Activated naive CD4-positive, alpha-beta T cell treated with anti-CD3 and anti-CD28 coated beads for 36 hours (primary cell): ENCODE measurements at regions of chr3 and their contacts with region 1.

Region 1: DNA sequence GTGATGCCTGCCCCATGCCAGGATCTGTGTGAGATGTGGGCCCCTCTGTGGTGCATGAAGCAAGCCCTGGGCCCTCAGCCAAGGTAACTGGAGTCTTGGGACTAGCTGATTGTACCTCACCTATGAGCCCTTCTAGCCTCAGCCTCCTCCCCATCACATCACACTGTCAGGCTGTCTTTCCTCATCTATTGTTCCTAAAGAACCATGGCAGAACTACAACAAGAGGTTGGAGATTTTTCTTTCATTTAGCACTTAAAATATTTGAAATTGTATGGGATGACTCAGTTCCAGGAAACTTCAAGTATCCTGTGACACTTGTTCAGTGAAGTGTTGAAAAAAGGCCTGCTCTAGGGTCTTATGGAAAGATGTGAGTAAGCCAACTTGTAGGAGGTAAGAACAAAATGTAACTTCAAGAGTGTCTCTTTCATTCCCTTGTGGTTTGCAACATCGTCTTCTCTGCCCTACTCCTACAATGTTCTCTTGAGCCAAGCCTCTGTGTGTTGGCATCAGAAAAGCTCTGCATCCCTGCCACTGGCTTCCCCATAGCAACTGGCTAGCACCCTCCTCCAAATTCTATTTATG is 58.7 kb upstream of the TIPARP start:
- DNase-seq: no peak
- H3K4me3 Mint-ChIP-seq: no peak overlapping the region
- H3K27ac Mint-ChIP-seq: peak overlapping the region; percentile 65
- H3K4me1 Mint-ChIP-seq: peaks cover 21% of the 10 kb centered on the region
- H3K27me3 Mint-ChIP-seq: peaks cover 3% of the 10 kb centered on the region

Region 2: DNA sequence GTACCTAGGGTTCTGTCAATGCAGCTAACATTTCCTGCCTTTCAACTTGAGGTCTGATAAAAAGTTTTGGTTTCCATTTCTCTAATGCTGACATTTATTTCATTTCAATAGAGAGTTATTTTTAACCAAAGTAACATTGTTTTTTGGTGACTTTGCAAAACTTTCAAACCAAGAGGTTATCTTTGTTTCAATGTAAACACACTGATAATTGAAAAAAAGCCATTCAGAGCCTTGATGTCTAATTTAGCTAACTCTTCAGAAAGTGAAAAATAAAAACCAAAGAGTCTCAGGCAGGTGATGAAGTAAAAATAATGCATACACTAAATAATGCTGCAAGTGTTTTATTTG is 49.1 kb after region 1 on chr3:
- CTCF ChIA-PET with region 1: no interaction called
- intact Hi-C with region 1: loop called (anchors 2 kb)
- DNase-seq: no peak
- H3K4me3 Mint-ChIP-seq: no peak overlapping the region
- H3K27ac Mint-ChIP-seq: peak overlapping the region; percentile 27
- H3K4me1 Mint-ChIP-seq: peaks cover 29% of the 10 kb centered on the region
- H3K27me3 Mint-ChIP-seq: no peaks in the 10 kb centered on the region

Region 3: GRCh38 chr3:156826144-156826895 is 210.6 kb after region 1 on chr3 and contains the start of gene LEKR1:
- CTCF ChIA-PET with region 1: no interaction called
- intact Hi-C with region 1: loop called (anchors 5 kb)
- DNase-seq: peak; percentile 69
- H3K4me3 Mint-ChIP-seq: peak within 1 kb of the TSS; percentile 93
- H3K27ac Mint-ChIP-seq: peak within 1 kb of the TSS; percentile 92
- H3K4me1 Mint-ChIP-seq: peaks cover 16% of the 10 kb centered on the region
- H3K27me3 Mint-ChIP-seq: no peaks in the 10 kb centered on the region
- total RNA-seq, gene LEKR1: 0.43 to 0.77 TPM